ENCODE measurements at regions of chr9 and their contacts with region 1.

Region 1: GRCh38 chr9:99459919-99460318 is 237.8 kb downstream of the SEC61B start:
- DNase-seq: no peak

Region 2: DNA sequence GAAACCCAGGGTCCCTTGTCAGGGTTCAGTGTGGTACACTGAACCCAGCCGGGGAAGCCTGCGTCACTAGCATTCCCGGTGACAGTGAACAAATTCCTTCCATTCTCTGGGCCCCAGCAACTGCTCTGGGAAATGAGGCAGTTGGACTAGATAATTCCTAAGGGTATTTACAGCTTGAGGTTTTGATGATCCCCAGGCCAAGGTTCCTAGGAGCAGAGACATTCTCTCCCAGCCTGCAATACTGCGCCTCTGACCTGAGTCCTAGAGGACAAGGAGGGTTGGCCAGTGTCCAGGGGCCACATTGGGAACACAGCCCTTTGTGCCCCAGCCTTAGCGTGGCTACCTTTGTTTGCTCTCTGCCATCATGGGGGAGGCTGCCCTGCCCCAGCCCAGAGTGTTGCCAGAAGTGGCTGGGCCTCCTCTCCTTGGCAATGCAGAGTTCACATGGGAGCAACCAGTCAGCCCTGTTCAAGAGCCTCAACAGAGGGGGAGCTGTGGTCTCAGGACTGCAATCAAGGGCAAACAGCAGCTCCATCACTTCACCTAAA is 59.7 kb before region 1 on chr9:
- intact Hi-C with region 1: no loop called
- DNase-seq: peak; percentile 81

Region 3: GRCh38 chr9:99509900-99510535 is 50.1 kb after region 1 on chr9:
- intact Hi-C with region 1: loop called in 1 of 2 experiments (anchors 5 kb)
- DNase-seq: no peak

Measured in posterior vena cava (tissue), 2 donors.